ENCODE measurements at regions of chrX and their contacts with region 1.

Region 1: DNA sequence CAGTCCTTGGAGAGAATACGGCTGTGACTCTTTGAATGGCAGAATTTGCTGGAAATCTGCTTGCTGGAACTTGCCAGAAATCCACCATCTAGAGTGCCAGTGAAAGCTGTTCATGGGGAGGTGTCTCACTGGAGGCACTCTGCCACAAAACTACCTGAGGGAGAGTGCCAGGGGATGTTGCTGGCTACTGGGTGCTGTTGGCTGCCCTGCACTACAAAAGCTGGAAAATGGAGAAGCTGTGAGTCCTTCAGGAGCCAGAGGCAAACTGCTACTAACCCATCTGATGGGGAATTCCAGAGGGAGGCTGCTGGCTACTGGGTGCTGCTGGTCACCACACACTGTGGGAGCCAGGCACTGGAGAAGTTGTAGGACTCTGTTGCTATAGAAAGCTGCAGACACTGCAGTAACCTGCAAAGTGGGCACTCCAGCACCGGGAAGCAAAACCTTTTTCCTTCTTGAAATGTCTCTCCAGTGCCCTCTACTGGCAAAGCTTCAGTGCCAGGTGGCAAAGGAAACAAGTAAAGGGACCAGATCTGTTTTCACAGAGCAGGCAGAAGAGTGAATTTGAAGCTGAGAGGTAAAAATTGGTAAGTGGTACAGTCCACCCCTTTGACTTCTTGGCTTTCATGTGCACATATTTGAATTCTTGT is 47.8 kb upstream of the HSD17B10 start:
- DNase-seq: peak; percentile 61
- H3K4me3 ChIP-seq: no peak overlapping the region
- H3K27ac ChIP-seq: no peak overlapping the region
- H3K4me1 ChIP-seq: peaks cover 29% of the 10 kb centered on the region
- H3K27me3 ChIP-seq: no peaks in the 10 kb centered on the region
- CTCF ChIP-seq: peak; percentile 83 to 86

Region 2: GRCh38 chrX:53412446-53412845 is 69.5 kb before region 1 on chrX:
- CTCF ChIA-PET with region 1: no interaction called
- dilution Hi-C with region 1: loop called (anchors 5 kb)
- in situ Hi-C with region 1: no loop called
- intact Hi-C with region 1: no loop called
- DNase-seq: no peak
- H3K4me3 ChIP-seq: no peak overlapping the region
- H3K27ac ChIP-seq: no peak overlapping the region
- H3K4me1 ChIP-seq: no peaks in the 10 kb centered on the region
- H3K27me3 ChIP-seq: no peaks in the 10 kb centered on the region
- CTCF ChIP-seq: no peak

Region 3: GRCh38 chrX:53441531-53442321 is 40.2 kb before region 1 on chrX:
- CTCF ChIA-PET with region 1: interaction called, 3 read pairs
- dilution Hi-C with region 1: no loop called
- in situ Hi-C with region 1: no loop called
- intact Hi-C with region 1: loop called (anchors 2 kb)
- DNase-seq: peak; percentile 71
- H3K4me3 ChIP-seq: peak overlapping the region; percentile 38 to 49 (median 46)
- H3K27ac ChIP-seq: peak overlapping the region; percentile 60
- H3K4me1 ChIP-seq: peaks cover 28% of the 10 kb centered on the region
- H3K27me3 ChIP-seq: peaks cover 3% of the 10 kb centered on the region
- CTCF ChIP-seq: peak in 1 of 2 donors; percentile 5

Region 4: DNA sequence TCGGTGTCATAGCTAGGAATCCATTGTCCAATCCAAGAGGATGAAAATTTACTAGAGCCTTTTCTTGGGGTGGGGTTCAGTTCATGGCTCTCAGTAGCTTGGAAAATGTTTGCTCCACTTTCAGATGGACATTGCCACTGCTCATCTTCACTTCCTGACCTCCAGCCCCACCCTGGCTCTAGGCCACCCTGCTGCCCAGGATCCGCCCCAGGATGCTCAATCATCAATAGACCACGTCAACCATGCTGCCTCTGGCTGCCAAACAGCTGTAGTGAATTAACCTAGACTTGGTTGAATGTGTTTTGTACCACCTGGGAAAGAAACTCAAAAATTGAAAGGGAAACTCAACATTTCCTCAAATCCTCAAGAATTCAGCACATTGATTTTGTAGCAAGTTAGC is 10.6 kb before region 1 on chrX:
- CTCF ChIA-PET with region 1: interaction called, 12 read pairs
- dilution Hi-C with region 1: no loop called
- in situ Hi-C with region 1: no loop called
- intact Hi-C with region 1: no loop called
- DNase-seq: no peak
- H3K4me3 ChIP-seq: no peak overlapping the region
- H3K27ac ChIP-seq: no peak overlapping the region
- H3K4me1 ChIP-seq: peaks cover 8% of the 10 kb centered on the region
- H3K27me3 ChIP-seq: no peaks in the 10 kb centered on the region
- CTCF ChIP-seq: no peak

Region 5: GRCh38 chrX:53526999-53527398 is 45.1 kb after region 1 on chrX:
- CTCF ChIA-PET with region 1: no interaction called
- dilution Hi-C with region 1: loop called (anchors 5 kb)
- in situ Hi-C with region 1: no loop called
- intact Hi-C with region 1: loop called (anchors 1 kb)
- DNase-seq: no peak
- H3K4me3 ChIP-seq: no peak overlapping the region
- H3K27ac ChIP-seq: no peak overlapping the region
- H3K4me1 ChIP-seq: no peaks in the 10 kb centered on the region
- H3K27me3 ChIP-seq: no peaks in the 10 kb centered on the region
- CTCF ChIP-seq: no peak

Region 6: GRCh38 chrX:53538781-53539180 is 56.8 kb after region 1 on chrX:
- CTCF ChIA-PET with region 1: no interaction called
- dilution Hi-C with region 1: loop called (anchors 5 kb)
- in situ Hi-C with region 1: no loop called
- intact Hi-C with region 1: no loop called
- DNase-seq: no peak
- H3K4me3 ChIP-seq: no peak overlapping the region
- H3K27ac ChIP-seq: no peak overlapping the region
- H3K4me1 ChIP-seq: peaks cover 6% of the 10 kb centered on the region
- H3K27me3 ChIP-seq: peaks cover 3% of the 10 kb centered on the region
- CTCF ChIP-seq: no peak

Measured in mammary epithelial cell (primary cell).